ENCODE measurements at regions of chr19 and their contacts with region 1.

Region 1: GRCh38 chr19:51546650-51547396 is 15.4 kb upstream of the SIGLEC6 start:
- DNase-seq: peak; percentile 98 to 99 (median 99)
- H3K4me3 ChIP-seq: peak overlapping the region in 5 of 7 experiments; percentile 9 to 65 (median 42)
- H3K27ac ChIP-seq: peak overlapping the region; percentile 50 to 85
- H3K4me1 ChIP-seq: peaks cover 19 to 70% (median 62%) of the 10 kb centered on the region in 4 experiments
- H3K27me3 ChIP-seq: peaks cover 0 to 11% (median 11%) of the 10 kb centered on the region in 5 experiments

Region 2: GRCh38 chr19:51514866-51515481 is 31.8 kb before region 1 on chr19:
- CTCF ChIA-PET with region 1: interaction called, 40 read pairs
- POLR2A ChIA-PET with region 1: interaction called, 3 read pairs
- DNase-seq: peak; percentile 62 to 79 (median 72)
- H3K4me3 ChIP-seq: no peak overlapping the region
- H3K27ac ChIP-seq: no peak overlapping the region
- H3K4me1 ChIP-seq: peaks cover 0 to 2% (median 0%) of the 10 kb centered on the region in 4 experiments
- H3K27me3 ChIP-seq: peaks cover 0 to 12% (median 3%) of the 10 kb centered on the region in 5 experiments

Region 3: DNA sequence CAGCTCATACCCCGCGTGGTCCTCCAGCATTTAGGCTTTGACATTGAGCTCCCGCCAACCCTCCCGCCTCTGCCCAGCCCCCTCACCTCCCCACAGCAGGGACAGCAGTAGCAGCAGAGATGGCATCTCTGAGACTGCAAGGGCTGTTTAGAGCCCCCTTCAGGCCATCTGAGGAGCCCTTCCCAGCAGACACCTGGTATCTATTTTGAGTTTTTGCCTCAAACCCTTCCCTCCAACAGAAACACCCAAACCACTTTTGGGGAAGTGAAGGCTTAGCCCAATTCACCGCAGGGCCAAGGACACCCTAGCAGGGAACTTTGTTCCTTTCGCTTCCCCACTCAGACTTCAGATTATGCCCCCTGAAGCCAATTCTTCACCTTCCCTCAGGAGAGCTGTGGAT is 18.0 kb after region 1 on chr19:
- CTCF ChIA-PET with region 1: interaction called, 14 read pairs
- POLR2A ChIA-PET with region 1: interaction called, 4 read pairs
- DNase-seq: peak; percentile 49 to 85 (median 83)
- H3K4me3 ChIP-seq: peak overlapping the region in 2 of 7 experiments; percentile 25 to 47
- H3K27ac ChIP-seq: no peak overlapping the region
- H3K4me1 ChIP-seq: peaks cover 4 to 36% (median 17%) of the 10 kb centered on the region in 4 experiments
- H3K27me3 ChIP-seq: peaks cover 2 to 29% (median 4%) of the 10 kb centered on the region in 5 experiments

Region 4: GRCh38 chr19:51637362-51637978 is 90.6 kb after region 1 on chr19:
- CTCF ChIA-PET with region 1: no interaction called
- POLR2A ChIA-PET with region 1: no interaction called
- DNase-seq: peak; percentile 31 to 66 (median 38)
- H3K4me3 ChIP-seq: no peak overlapping the region
- H3K27ac ChIP-seq: no peak overlapping the region
- H3K4me1 ChIP-seq: no peaks in the 10 kb centered on the region
- H3K27me3 ChIP-seq: no peaks in the 10 kb centered on the region

Measured in common myeloid progenitor, CD34-positive (primary cell).